B cell (primary cell): ENCODE measurements at regions of chr14 and their contacts with region 1.

Region 1: DNA sequence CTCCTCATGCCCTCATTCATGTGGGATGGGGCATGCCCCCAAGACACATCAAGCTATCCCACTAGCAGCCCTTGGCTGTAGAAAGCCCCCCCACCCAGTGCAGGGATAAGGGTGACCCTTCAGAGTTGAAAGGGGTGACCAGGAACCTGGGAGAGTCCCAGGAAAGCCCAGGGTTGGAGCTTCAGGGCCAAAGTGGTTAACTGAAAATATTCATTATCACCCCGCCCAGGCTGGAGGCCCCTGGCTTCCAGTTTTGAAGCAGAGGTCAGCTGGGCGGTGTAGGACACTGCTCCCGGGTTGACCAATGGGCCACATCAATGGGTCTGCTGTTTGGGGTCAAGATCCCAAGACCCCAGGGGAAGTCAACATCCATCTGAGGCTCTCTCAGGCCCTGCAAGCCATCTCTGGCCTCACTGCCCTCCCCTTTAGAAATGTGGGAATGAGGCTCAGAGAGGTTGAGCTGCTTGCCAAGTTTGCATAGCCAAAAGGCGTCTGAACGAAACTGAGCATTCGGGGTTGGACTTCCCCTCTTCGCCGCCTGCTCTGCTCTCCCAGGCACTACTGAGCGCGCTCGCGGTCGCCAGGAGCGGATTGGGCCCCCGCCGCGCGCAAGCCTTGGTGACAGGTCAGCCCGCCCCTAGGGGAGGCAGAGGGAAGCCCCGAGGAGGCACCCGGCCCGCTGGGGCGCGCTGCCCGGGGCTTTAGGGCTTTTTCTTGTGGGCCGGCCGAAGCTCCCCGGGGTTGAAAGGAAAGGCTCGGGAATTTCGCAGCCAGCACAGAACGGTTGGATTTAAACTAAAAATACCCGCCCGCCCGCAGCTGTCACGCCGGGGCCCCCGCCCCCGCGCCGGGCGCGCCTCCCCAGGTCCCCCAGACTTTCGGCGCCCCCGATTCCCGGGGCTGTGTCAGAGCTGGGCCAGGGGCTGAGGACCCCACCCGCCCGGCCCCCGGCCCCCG is 576 bp downstream of the SYNE3 start:
- DNase-seq: peak; percentile 95
- ATAC-seq: peak; percentile 85
- H3K4me3 ChIP-seq: peak overlapping the region; percentile 50 to 77 (median 72)
- H3K4me3 Mint-ChIP-seq: peak overlapping the region; percentile 95
- H3K27ac ChIP-seq: peak overlapping the region; percentile 77 to 79
- H3K27ac Mint-ChIP-seq: peak overlapping the region; percentile 95
- H3K4me1 ChIP-seq: peaks cover 66 to 76% of the 10 kb centered on the region in 2 donors
- H3K4me1 Mint-ChIP-seq: peaks cover 77% of the 10 kb centered on the region
- H3K27me3 ChIP-seq: no peaks in the 10 kb centered on the region
- H3K27me3 Mint-ChIP-seq: no peaks in the 10 kb centered on the region
- CTCF ChIP-seq: peak; percentile 65

Region 2: GRCh38 chr14:95327558-95328374 is 188.1 kb before region 1 on chr14:
- CTCF ChIA-PET with region 1: no interaction called
- POLR2A ChIA-PET with region 1: interaction called, 3 read pairs
- intact Hi-C with region 1: loop called (anchors 5 kb)
- DNase-seq: peak; percentile 88
- ATAC-seq: peak; percentile 86
- H3K4me3 ChIP-seq: peak overlapping the region in 4 of 5 experiments; percentile 20 to 42 (median 28)
- H3K4me3 Mint-ChIP-seq: peak overlapping the region; percentile 84
- H3K27ac ChIP-seq: peak overlapping the region; percentile 71 to 96
- H3K27ac Mint-ChIP-seq: peak overlapping the region; percentile 92
- H3K4me1 ChIP-seq: peaks cover 42 to 46% of the 10 kb centered on the region in 2 donors
- H3K4me1 Mint-ChIP-seq: peaks cover 54% of the 10 kb centered on the region
- H3K27me3 ChIP-seq: no peaks in the 10 kb centered on the region
- H3K27me3 Mint-ChIP-seq: no peaks in the 10 kb centered on the region
- CTCF ChIP-seq: no peak

Region 3: DNA sequence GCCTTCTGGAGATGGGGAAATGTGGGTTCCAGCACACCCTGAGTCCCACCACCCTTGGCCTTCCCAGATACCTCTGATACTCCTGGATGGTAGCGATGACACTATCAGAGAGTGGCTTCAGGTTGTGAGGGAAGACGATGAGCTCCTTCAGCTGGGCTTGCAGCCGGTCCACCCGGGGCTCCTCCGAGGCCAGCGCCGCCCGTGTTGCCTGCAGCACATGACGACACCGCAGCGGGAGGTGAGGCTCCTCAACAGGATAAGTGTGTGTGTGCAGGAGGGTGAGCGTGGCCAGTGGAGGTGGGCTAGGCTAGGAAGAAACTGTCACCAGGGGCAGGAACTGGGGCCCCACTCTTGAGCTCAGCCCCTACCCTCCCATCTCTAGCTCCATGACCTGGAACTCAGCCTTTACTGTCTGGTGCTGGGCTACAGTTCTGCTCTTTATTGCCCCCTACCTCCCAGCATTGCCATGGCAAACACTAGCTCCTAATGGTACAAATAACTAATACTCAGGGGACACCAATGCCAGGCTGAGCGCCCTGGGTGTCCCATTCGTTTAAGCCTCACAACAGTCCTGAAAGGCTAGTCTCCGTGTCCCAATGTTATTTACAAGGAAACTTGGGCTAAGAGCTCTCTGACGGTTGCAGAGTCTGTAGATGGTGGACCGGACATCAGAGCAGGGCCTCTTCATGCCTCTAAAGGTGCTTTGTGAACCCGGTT is 63.5 kb before region 1 on chr14:
- CTCF ChIA-PET with region 1: interaction called, 10 read pairs
- POLR2A ChIA-PET with region 1: interaction called, 5 read pairs
- intact Hi-C with region 1: no loop called
- DNase-seq: no peak
- ATAC-seq: no peak
- H3K4me3 ChIP-seq: no peak overlapping the region
- H3K4me3 Mint-ChIP-seq: no peak overlapping the region
- H3K27ac ChIP-seq: no peak overlapping the region
- H3K27ac Mint-ChIP-seq: no peak overlapping the region
- H3K4me1 ChIP-seq: peaks cover 11 to 13% of the 10 kb centered on the region in 2 donors
- H3K4me1 Mint-ChIP-seq: peaks cover 8% of the 10 kb centered on the region
- H3K27me3 ChIP-seq: no peaks in the 10 kb centered on the region
- H3K27me3 Mint-ChIP-seq: no peaks in the 10 kb centered on the region
- CTCF ChIP-seq: no peak

Region 4: GRCh38 chr14:95483309-95484165 is 32.3 kb before region 1 on chr14:
- CTCF ChIA-PET with region 1: interaction called, 9 read pairs
- POLR2A ChIA-PET with region 1: interaction called, 7 read pairs
- intact Hi-C with region 1: loop called (anchors 5 kb)
- DNase-seq: no peak
- ATAC-seq: no peak
- H3K4me3 ChIP-seq: no peak overlapping the region
- H3K4me3 Mint-ChIP-seq: no peak overlapping the region
- H3K27ac ChIP-seq: no peak overlapping the region
- H3K27ac Mint-ChIP-seq: peak overlapping the region; percentile 59
- H3K4me1 ChIP-seq: peaks cover 64 to 87% of the 10 kb centered on the region in 2 donors
- H3K4me1 Mint-ChIP-seq: peaks cover 80% of the 10 kb centered on the region
- H3K27me3 ChIP-seq: no peaks in the 10 kb centered on the region
- H3K27me3 Mint-ChIP-seq: no peaks in the 10 kb centered on the region
- CTCF ChIP-seq: no peak

Region 5: DNA sequence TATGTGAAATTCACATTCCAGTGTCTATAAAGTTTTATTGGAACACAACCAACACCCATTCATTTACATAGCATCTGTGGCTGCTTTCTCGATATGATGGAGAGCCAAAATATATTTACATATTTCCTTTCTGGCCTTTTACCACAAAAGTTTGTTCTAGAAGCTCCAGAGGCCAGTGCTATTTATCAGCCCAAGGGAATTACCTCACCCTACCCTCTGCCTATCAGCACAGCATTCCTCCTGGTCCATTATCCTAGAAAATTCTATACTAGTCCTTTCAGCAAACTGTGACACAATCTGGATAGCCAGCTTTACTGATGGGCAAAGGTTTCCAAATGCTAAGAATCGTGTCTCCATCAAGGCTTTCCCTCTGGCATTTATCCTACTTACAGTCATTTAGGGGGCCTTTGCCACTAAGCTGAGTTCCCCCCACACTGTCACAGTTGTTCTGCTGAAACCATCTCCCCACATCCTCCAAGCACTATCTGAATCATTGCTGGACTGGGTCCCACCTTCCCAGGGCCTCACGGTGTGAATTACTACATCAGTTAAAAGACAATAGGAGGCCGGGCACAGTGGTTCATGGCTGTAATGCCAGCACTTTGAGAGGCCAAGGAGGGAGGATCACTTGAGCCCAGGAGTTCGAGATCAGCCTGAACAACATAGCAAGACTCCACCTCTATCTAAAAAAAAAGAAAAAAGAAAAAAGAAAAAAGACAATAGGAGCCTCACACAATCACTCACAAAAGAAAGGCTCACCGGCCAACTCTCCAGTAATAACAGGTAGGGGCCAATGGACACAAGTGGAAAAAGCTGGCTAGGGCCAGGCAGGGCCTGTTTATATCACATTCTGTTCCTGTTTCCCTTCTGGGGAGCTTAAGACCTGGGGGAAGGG is 11.5 kb before region 1 on chr14:
- CTCF ChIA-PET with region 1: interaction called, 19 read pairs
- POLR2A ChIA-PET with region 1: interaction called, 3 read pairs
- intact Hi-C with region 1: no loop called
- DNase-seq: no peak
- ATAC-seq: no peak
- H3K4me3 ChIP-seq: no peak overlapping the region
- H3K4me3 Mint-ChIP-seq: peak overlapping the region; percentile 34
- H3K27ac ChIP-seq: peak overlapping the region in 1 of 2 donors; percentile 52
- H3K27ac Mint-ChIP-seq: peak overlapping the region; percentile 67
- H3K4me1 ChIP-seq: peaks cover 61 to 94% of the 10 kb centered on the region in 2 donors
- H3K4me1 Mint-ChIP-seq: peaks cover 90% of the 10 kb centered on the region
- H3K27me3 ChIP-seq: no peaks in the 10 kb centered on the region
- H3K27me3 Mint-ChIP-seq: no peaks in the 10 kb centered on the region
- CTCF ChIP-seq: no peak